Naive thymus-derived CD4-positive, alpha-beta T cell (primary cell): ENCODE measurements at regions of chr21 and their contacts with region 1.

Region 1: DNA sequence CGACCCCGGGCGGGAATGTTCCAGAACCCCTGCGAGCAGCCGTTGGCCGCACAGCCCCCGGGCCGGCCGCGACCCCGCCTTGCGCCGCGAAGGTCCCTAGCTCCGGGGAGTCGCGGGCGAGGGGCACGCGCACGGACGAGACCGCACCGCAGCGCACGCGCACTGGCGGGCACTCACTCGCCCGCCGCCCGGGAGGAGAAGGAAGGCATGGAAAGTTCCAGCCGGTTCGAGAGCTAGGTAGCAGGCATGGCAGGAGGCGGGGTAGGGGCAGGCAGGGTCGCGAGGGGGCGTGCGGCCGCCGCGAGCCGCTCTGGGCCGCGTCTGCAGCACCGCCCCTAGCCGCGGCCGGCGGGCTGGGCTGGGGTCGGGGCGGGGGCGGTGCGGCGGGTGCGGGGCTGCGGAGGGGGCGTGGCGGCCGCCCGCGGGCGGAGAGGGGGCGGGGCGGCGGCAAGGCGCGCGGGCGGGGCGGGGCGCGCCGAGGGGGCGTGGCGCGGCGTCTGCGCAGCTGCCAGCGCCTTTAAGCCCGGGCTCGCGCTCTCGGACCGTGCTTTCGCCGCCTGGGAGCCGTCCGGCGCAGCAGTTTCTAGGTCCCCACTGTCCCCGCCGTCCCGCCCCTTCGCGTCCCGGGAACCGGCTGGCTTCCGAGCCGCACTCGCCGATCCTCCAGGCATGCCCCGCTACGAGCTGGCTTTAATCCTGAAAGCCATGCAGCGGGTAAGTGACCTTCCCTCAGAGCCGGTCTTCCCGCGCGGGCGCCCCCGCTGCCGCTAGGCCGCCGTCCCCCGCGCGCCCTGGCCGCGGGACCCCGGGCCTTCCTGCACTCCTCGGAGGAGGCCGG is at the starts of genes MRPS6 and SLC5A3:
- DNase-seq: peak; percentile 58 to 82 (median 72)
- ATAC-seq: peak; percentile 89
- H3K4me3 ChIP-seq: peak within 1 kb of the TSS; percentile 72
- H3K4me3 Mint-ChIP-seq: peak within 1 kb of the TSS; percentile 88 to 98 (median 96)
- H3K27ac ChIP-seq: peak within 1 kb of the TSS; percentile 82
- H3K27ac Mint-ChIP-seq: peak within 1 kb of the TSS; percentile 89 to 95 (median 93)
- H3K4me1 ChIP-seq: peaks cover 31 to 34% of the 10 kb centered on the region in 2 donors
- H3K4me1 Mint-ChIP-seq: peaks cover 9 to 54% (median 46%) of the 10 kb centered on the region in 7 donors
- H3K27me3 ChIP-seq: no peaks in the 10 kb centered on the region
- H3K27me3 Mint-ChIP-seq: peaks cover 0 to 7% (median 0%) of the 10 kb centered on the region in 5 donors
- total RNA-seq, gene MRPS6: 25.5 to 92.7 (median 87.9) TPM
- total RNA-seq, gene SLC5A3: 8.8 to 45.5 (median 34.0) TPM

Region 2: GRCh38 chr21:32597205-32597604 is 1476.0 kb before region 1 on chr21:
- CTCF ChIA-PET with region 1: no interaction called
- POLR2A ChIA-PET with region 1: no interaction called
- intact Hi-C with region 1: no loop called
- DNase-seq: no peak
- ATAC-seq: no peak
- H3K4me3 ChIP-seq: no peak overlapping the region
- H3K4me3 Mint-ChIP-seq: no peak overlapping the region
- H3K27ac ChIP-seq: no peak overlapping the region
- H3K27ac Mint-ChIP-seq: peak overlapping the region in 1 of 9 donors; percentile 8
- H3K4me1 ChIP-seq: no peaks in the 10 kb centered on the region
- H3K4me1 Mint-ChIP-seq: peaks cover 0 to 4% (median 0%) of the 10 kb centered on the region in 7 donors
- H3K27me3 ChIP-seq: no peaks in the 10 kb centered on the region
- H3K27me3 Mint-ChIP-seq: no peaks in the 10 kb centered on the region

Region 3: GRCh38 chr21:33976082-33977016 is 96.9 kb before region 1 on chr21:
- CTCF ChIA-PET with region 1: no interaction called
- POLR2A ChIA-PET with region 1: no interaction called
- intact Hi-C with region 1: loop called in 1 of 2 experiments (anchors 1 kb)
- DNase-seq: peak in 8 of 9 donors; percentile 23 to 62 (median 32)
- ATAC-seq: peak; percentile 62
- H3K4me3 ChIP-seq: peak overlapping the region; percentile 18
- H3K4me3 Mint-ChIP-seq: peak overlapping the region; percentile 43 to 78 (median 72)
- H3K27ac ChIP-seq: peak overlapping the region; percentile 64
- H3K27ac Mint-ChIP-seq: peak overlapping the region; percentile 79 to 99 (median 86)
- H3K4me1 ChIP-seq: peaks cover 28 to 32% of the 10 kb centered on the region in 2 donors
- H3K4me1 Mint-ChIP-seq: peaks cover 36 to 73% (median 53%) of the 10 kb centered on the region in 7 donors
- H3K27me3 ChIP-seq: no peaks in the 10 kb centered on the region
- H3K27me3 Mint-ChIP-seq: no peaks in the 10 kb centered on the region

Region 4: DNA sequence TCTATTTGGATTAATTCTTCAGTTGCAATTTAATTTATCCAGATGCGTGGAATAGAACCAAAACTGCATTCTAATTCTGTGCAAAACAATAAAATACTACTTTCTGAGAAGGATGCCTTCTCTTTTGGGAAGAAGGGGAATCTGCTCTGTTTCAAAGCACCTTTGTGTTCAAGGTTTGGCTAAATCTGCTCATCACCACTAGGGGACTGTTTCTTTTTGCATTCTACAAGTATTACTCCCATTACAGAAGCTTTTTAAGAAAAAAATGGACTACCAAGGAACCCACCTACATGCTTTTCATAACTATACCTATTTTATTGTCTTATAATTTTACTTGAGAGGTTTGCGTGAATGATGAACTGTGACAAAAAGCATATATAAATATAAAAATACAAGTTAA is 18.4 kb after region 1 on chr21:
- CTCF ChIA-PET with region 1: interaction called, 5 read pairs
- POLR2A ChIA-PET with region 1: interaction called, 22 read pairs
- intact Hi-C with region 1: loop called (anchors 1 to 2 kb)
- DNase-seq: no peak
- ATAC-seq: no peak
- H3K4me3 ChIP-seq: no peak overlapping the region
- H3K4me3 Mint-ChIP-seq: peak overlapping the region in 5 of 10 donors; percentile 17 to 54 (median 39)
- H3K27ac ChIP-seq: no peak overlapping the region
- H3K27ac Mint-ChIP-seq: peak overlapping the region in 5 of 9 donors; percentile 2 to 55 (median 38)
- H3K4me1 ChIP-seq: peaks cover 17 to 41% of the 10 kb centered on the region in 2 donors
- H3K4me1 Mint-ChIP-seq: peaks cover 1 to 74% (median 56%) of the 10 kb centered on the region in 7 donors
- H3K27me3 ChIP-seq: no peaks in the 10 kb centered on the region
- H3K27me3 Mint-ChIP-seq: no peaks in the 10 kb centered on the region

Region 5: GRCh38 chr21:34148419-34148804 is 75.2 kb after region 1 on chr21:
- CTCF ChIA-PET with region 1: no interaction called
- POLR2A ChIA-PET with region 1: no interaction called
- intact Hi-C with region 1: no loop called
- DNase-seq: no peak
- ATAC-seq: no peak
- H3K4me3 ChIP-seq: no peak overlapping the region
- H3K4me3 Mint-ChIP-seq: no peak overlapping the region
- H3K27ac ChIP-seq: no peak overlapping the region
- H3K27ac Mint-ChIP-seq: peak overlapping the region in 1 of 9 donors; percentile 37
- H3K4me1 ChIP-seq: no peaks in the 10 kb centered on the region
- H3K4me1 Mint-ChIP-seq: peaks cover 0 to 28% (median 15%) of the 10 kb centered on the region in 7 donors
- H3K27me3 ChIP-seq: no peaks in the 10 kb centered on the region
- H3K27me3 Mint-ChIP-seq: no peaks in the 10 kb centered on the region

Region 6: DNA sequence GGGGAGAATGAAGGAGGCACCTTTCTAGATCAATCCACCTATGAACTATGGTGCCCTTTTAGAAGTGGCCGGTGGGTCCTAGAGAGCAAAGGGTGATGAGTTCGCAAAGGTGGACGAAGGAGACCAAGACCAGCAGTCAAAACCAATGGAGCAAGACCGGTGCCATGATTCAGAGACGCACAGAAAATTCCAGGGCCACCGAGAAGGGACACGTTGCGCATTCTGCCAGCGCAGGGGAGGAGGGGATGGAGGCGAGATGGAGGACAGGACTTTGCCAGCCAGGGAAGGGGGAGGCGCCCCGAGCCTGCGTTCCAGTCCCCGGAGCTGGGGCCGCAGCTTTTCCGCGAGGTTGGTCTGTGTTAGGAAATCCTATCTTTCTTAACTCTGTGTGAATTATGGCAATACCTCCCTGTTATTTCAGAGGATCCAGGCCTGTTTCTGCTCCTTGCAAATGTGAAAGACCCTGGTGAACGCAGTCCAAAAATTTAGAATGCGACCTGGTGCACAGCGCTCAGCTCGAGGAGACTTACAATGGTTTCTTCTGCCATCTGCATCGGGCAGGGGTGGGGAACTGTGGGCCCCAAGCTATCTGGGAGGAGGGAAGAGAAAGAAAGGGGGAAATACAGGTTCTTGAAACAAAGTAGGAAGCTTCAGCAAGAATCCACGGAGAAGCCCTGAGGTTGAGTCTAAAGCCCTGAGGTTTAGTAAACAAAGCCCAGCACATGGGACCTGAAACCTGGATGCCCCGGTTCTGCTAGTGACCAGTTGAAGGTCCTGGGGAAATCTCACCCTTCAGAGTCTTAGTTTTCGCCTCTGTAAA is 129.5 kb after region 1 on chr21:
- CTCF ChIA-PET with region 1: no interaction called
- POLR2A ChIA-PET with region 1: interaction called, 10 read pairs
- intact Hi-C with region 1: loop called (anchors 2 to 5 kb)
- DNase-seq: no peak
- ATAC-seq: no peak
- H3K4me3 ChIP-seq: peak overlapping the region; percentile 47
- H3K4me3 Mint-ChIP-seq: peak overlapping the region; percentile 70 to 92 (median 86)
- H3K27ac ChIP-seq: no peak overlapping the region
- H3K27ac Mint-ChIP-seq: peak overlapping the region in 8 of 9 donors; percentile 24 to 87 (median 63)
- H3K4me1 ChIP-seq: peaks cover 8 to 31% of the 10 kb centered on the region in 2 donors
- H3K4me1 Mint-ChIP-seq: peaks cover 28 to 64% (median 56%) of the 10 kb centered on the region in 7 donors
- H3K27me3 ChIP-seq: no peaks in the 10 kb centered on the region
- H3K27me3 Mint-ChIP-seq: no peaks in the 10 kb centered on the region

Region 7: GRCh38 chr21:34351786-34352241 is 278.6 kb after region 1 on chr21:
- CTCF ChIA-PET with region 1: interaction called, 5 read pairs
- POLR2A ChIA-PET with region 1: no interaction called
- intact Hi-C with region 1: loop called (anchors 1 to 5 kb)
- DNase-seq: peak in 2 of 9 donors; percentile 16 to 23
- ATAC-seq: peak; percentile 69
- H3K4me3 ChIP-seq: no peak overlapping the region
- H3K4me3 Mint-ChIP-seq: no peak overlapping the region
- H3K27ac ChIP-seq: no peak overlapping the region
- H3K27ac Mint-ChIP-seq: no peak overlapping the region
- H3K4me1 ChIP-seq: no peaks in the 10 kb centered on the region
- H3K4me1 Mint-ChIP-seq: peaks cover 0 to 11% (median 8%) of the 10 kb centered on the region in 7 donors
- H3K27me3 ChIP-seq: no peaks in the 10 kb centered on the region
- H3K27me3 Mint-ChIP-seq: peaks cover 10 to 25% (median 22%) of the 10 kb centered on the region in 5 donors